GM12878 (cell line): ENCODE measurements at regions of chr12 and their contacts with region 1.

Region 1: GRCh38 chr12:75933101-75933500 is 98.5 kb downstream of the PHLDA1 start:
- DNase-seq: no peak
- ATAC-seq: no peak
- H3K4me3 ChIP-seq: no peak overlapping the region
- H3K27ac ChIP-seq: no peak overlapping the region
- H3K4me1 ChIP-seq: peaks cover 12% of the 10 kb centered on the region
- H3K27me3 ChIP-seq: no peaks in the 10 kb centered on the region
- CTCF ChIP-seq: no peak
- EP300 ChIP-seq: no peak
- POLR2A ChIP-seq: no peak
- RAD21 ChIP-seq: no peak

Region 2: GRCh38 chr12:75917083-75917482 is 16.0 kb before region 1 on chr12:
- CTCF ChIA-PET with region 1: interaction called, 8 read pairs
- POLR2A ChIA-PET with region 1: interaction called, 16 read pairs
- RAD21 ChIA-PET with region 1: interaction called, 16 read pairs
- SMC1A ChIA-PET with region 1: interaction called, 112 read pairs
- in situ Hi-C with region 1: no loop called
- intact Hi-C with region 1: no loop called
- DNase-seq: peak; percentile 17
- ATAC-seq: peak; percentile 93
- H3K4me3 ChIP-seq: no peak overlapping the region
- H3K27ac ChIP-seq: no peak overlapping the region
- H3K4me1 ChIP-seq: no peaks in the 10 kb centered on the region
- H3K27me3 ChIP-seq: no peaks in the 10 kb centered on the region
- CTCF ChIP-seq: no peak
- EP300 ChIP-seq: peak; percentile 24 to 70; a peak in 3 of 4 replicates
- POLR2A ChIP-seq: no peak
- RAD21 ChIP-seq: no peak

Region 3: GRCh38 chr12:75944097-75944904 is 11.2 kb after region 1 on chr12:
- CTCF ChIA-PET with region 1: interaction called, 3 read pairs
- POLR2A ChIA-PET with region 1: interaction called, 4 read pairs
- RAD21 ChIA-PET with region 1: interaction called, 4 read pairs
- SMC1A ChIA-PET with region 1: interaction called, 44 read pairs
- in situ Hi-C with region 1: no loop called
- intact Hi-C with region 1: loop called (anchors 1 kb)
- DNase-seq: peak; percentile 54
- ATAC-seq: peak; percentile 92
- H3K4me3 ChIP-seq: no peak overlapping the region
- H3K27ac ChIP-seq: peak overlapping the region; percentile 37
- H3K4me1 ChIP-seq: peaks cover 18% of the 10 kb centered on the region
- H3K27me3 ChIP-seq: no peaks in the 10 kb centered on the region
- CTCF ChIP-seq: no peak
- EP300 ChIP-seq: 0 out of 4 replicates have a peak, but pooled peaks of 1 of the 2 experiments have one; percentile 24
- POLR2A ChIP-seq: no peak
- RAD21 ChIP-seq: no peak

Region 4: GRCh38 chr12:75964150-75964549 is 31.0 kb after region 1 on chr12:
- CTCF ChIA-PET with region 1: interaction called, 3 read pairs
- POLR2A ChIA-PET with region 1: interaction called, 6 read pairs
- RAD21 ChIA-PET with region 1: interaction called, 10 read pairs
- SMC1A ChIA-PET with region 1: interaction called, 9 read pairs
- in situ Hi-C with region 1: no loop called
- intact Hi-C with region 1: no loop called
- DNase-seq: no peak
- ATAC-seq: peak; percentile 74
- H3K4me3 ChIP-seq: no peak overlapping the region
- H3K27ac ChIP-seq: no peak overlapping the region
- H3K4me1 ChIP-seq: no peaks in the 10 kb centered on the region
- H3K27me3 ChIP-seq: no peaks in the 10 kb centered on the region
- CTCF ChIP-seq: no peak
- EP300 ChIP-seq: no peak
- POLR2A ChIP-seq: no peak
- RAD21 ChIP-seq: no peak

Region 5: GRCh38 chr12:76462668-76463224 is 529.6 kb after region 1 on chr12:
- CTCF ChIA-PET with region 1: no interaction called
- POLR2A ChIA-PET with region 1: no interaction called
- RAD21 ChIA-PET with region 1: no interaction called
- SMC1A ChIA-PET with region 1: no interaction called
- in situ Hi-C with region 1: no loop called
- intact Hi-C with region 1: no loop called
- DNase-seq: no peak
- ATAC-seq: peak; percentile 35; the same call in 2 of the 3 replicates
- H3K4me3 ChIP-seq: no peak overlapping the region
- H3K27ac ChIP-seq: no peak overlapping the region
- H3K4me1 ChIP-seq: no peaks in the 10 kb centered on the region
- H3K27me3 ChIP-seq: no peaks in the 10 kb centered on the region
- CTCF ChIP-seq: no peak
- EP300 ChIP-seq: no peak
- POLR2A ChIP-seq: no peak
- RAD21 ChIP-seq: no peak